Activated CD4-positive, alpha-beta T cell treated with anti-CD3 and anti-CD28 coated beads for 36 hours (primary cell): ENCODE measurements at regions of chr1 and their contacts with region 1.

Region 1: DNA sequence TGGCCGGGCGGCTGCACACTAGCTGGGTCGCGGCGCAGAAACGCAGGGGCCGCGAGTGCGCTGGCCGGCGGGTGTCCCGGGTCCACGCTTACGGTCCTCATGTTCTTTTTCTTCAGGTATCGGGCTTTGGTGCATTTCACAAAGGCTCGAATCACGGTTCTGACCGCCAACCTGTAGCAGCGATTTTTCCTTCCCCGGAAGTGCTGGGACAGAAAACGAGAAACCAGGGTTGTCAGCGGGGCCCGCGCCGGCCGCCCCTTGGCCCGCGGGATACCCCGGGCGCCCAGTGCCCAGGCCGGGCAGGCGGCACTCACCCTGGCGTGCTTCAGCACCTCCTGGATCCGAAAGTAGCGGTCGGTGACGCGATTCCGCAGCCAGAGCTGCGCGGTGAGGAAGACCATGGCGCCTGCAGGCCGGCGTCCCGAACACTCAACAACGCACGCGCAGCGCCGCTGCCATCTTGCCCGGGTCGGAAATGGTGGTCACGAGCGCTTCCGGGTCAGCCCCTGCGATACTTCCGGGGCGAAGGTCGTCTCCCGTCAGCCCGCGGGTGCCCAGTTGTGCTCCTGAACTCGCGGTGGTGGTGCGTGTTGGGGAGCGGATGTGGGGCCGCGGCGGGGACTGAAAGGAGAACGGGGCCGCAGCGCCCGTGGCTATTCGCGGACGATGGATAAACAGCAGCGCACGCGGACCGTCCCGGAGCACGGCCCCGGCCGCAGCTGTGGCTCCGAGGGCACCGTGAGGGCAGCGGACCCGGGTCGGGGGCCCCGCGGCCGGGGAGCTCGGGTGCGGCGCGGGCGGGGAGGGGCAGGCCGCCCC is at the start of gene MRPL20:
- DNase-seq: peak; percentile 98
- ATAC-seq: peak; percentile 95
- H3K4me3 Mint-ChIP-seq: peak within 1 kb of the TSS; percentile 92
- H3K27ac Mint-ChIP-seq: peak within 1 kb of the TSS; percentile 91
- H3K4me1 Mint-ChIP-seq: peaks cover 41% of the 10 kb centered on the region
- H3K27me3 Mint-ChIP-seq: no peaks in the 10 kb centered on the region
- total RNA-seq, gene MRPL20: 126 to 143 TPM

Region 2: DNA sequence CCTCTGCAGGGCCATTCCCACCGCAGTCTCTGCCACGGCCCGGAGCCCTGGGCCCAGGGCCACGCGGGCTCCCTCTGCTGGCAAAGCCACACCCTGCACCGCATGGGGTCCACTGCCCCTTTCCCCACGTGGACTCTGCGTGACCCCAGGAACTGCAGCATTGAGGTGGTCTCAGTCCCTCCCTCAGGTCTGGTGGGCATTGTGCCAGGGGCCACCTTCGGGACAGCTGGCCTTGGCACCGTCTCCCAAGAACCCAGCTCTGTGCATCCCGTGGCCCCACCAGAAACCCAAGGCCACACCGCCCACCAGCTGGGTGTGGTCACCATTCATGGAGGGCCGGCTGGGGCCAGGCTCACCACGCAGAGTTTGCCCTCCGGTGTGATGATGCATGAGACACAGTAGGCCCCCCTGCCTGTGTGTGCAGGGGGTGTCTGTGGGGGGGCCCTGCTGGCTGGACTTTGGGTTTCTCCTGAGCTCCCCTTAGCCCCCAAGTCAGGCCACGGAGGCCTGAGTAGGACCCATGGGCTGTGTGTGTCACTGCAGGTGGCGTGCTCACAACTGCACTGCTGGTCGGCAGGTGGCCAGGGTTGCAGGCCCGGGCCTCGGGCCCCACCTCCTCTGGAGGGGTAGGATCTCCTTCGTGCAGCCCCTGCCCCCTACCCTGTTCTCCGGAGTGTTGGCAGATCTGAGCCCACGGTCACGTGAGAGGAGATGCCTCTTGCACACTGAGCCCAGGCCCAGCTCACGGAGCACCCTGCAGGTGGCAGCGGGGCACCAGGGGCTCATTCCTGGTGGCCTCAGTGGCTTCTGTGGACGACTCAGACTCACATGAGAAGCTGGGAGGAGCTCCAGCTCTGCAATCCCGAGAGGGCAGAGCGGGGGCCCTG is 34.2 kb after region 1 on chr1:
- CTCF ChIA-PET with region 1: interaction called, 3 read pairs
- POLR2A ChIA-PET with region 1: no interaction called
- intact Hi-C with region 1: loop called in 1 of 2 experiments (anchors 5 kb)
- DNase-seq: peak; percentile 77
- ATAC-seq: peak; percentile 93
- H3K4me3 Mint-ChIP-seq: no peak overlapping the region
- H3K27ac Mint-ChIP-seq: no peak overlapping the region
- H3K4me1 Mint-ChIP-seq: peaks cover 2% of the 10 kb centered on the region
- H3K27me3 Mint-ChIP-seq: peaks cover 10% of the 10 kb centered on the region